Activated T-helper 2 cell treated with anti-CD3 and anti-CD28 coated beads, Interferon-gamma antibody, Interleukin-2, Interleukin-4, amounts not matched to agents 10 μg/mL and 5 μg/mL and 100 μg/mL, durations not matched to agents 14 hours and 24 hours and 36 hours (primary cell): ENCODE measurements at regions of chr7 and their contacts with region 1.

Region 1: GRCh38 chr7:6577365-6578113 is at the start of gene ZDHHC4:
- DNase-seq: peak; percentile 80
- H3K4me3 Mint-ChIP-seq: peak within 1 kb of the TSS; percentile 82
- H3K27ac Mint-ChIP-seq: peak within 1 kb of the TSS; percentile 82
- H3K4me1 Mint-ChIP-seq: peaks cover 23% of the 10 kb centered on the region
- H3K27me3 Mint-ChIP-seq: no peaks in the 10 kb centered on the region
- total RNA-seq, gene ZDHHC4: 23.9 and 29.9 TPM in 2 replicates

Region 2: DNA sequence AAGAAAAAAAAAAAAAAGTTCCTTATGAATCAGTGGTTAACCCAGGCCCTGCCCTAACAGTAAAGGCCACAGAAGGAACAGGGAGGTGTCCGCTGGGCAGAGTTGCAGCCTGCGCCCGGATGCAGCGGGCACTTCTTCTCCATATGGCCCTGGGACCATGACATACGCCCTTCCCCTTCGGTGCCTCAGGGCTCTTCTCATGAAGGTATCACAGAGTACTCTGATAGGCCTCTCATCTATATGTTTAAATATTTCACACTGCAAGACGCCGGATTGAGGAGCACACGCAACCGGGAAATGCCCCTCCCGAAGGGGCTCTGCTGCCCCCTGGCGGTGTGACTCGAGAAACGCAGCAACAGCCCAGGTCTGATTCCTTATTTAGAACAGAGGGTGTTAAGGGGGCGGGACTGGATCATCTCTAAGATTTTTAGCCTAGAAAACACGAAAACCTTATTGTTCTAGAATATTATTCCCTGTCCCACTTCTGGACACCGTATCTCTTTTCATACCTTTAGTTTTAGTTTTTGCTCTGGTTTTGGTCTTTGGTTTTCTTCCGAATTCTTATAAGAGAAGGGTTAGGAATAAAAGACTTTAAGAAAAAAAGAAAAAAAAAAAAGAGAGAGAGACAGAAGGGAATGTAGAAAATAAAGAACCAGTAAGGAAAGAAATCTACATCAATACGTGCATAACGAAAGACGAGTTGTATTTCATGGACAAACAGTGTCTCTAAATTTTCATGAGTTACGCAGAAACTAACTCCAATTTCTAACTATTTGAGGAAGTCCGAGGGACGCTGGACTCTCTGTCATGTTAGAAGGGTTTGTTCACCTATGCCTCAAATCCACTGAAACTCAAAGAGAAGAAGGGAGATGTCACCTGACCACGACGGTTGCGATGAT is 141.8 kb before region 1 on chr7:
- intact Hi-C with region 1: no loop called
- DNase-seq: peak; percentile 81
- H3K4me3 Mint-ChIP-seq: peak overlapping the region; percentile 69
- H3K27ac Mint-ChIP-seq: peak overlapping the region; percentile 79
- H3K4me1 Mint-ChIP-seq: peaks cover 27% of the 10 kb centered on the region
- H3K27me3 Mint-ChIP-seq: no peaks in the 10 kb centered on the region

Region 3: GRCh38 chr7:6533893-6534495 is 43.5 kb before region 1 on chr7:
- intact Hi-C with region 1: loop called (anchors 2 kb)
- DNase-seq: no peak
- H3K4me3 Mint-ChIP-seq: no peak overlapping the region
- H3K27ac Mint-ChIP-seq: no peak overlapping the region
- H3K4me1 Mint-ChIP-seq: peaks cover 13% of the 10 kb centered on the region
- H3K27me3 Mint-ChIP-seq: peaks cover 37% of the 10 kb centered on the region

Region 4: DNA sequence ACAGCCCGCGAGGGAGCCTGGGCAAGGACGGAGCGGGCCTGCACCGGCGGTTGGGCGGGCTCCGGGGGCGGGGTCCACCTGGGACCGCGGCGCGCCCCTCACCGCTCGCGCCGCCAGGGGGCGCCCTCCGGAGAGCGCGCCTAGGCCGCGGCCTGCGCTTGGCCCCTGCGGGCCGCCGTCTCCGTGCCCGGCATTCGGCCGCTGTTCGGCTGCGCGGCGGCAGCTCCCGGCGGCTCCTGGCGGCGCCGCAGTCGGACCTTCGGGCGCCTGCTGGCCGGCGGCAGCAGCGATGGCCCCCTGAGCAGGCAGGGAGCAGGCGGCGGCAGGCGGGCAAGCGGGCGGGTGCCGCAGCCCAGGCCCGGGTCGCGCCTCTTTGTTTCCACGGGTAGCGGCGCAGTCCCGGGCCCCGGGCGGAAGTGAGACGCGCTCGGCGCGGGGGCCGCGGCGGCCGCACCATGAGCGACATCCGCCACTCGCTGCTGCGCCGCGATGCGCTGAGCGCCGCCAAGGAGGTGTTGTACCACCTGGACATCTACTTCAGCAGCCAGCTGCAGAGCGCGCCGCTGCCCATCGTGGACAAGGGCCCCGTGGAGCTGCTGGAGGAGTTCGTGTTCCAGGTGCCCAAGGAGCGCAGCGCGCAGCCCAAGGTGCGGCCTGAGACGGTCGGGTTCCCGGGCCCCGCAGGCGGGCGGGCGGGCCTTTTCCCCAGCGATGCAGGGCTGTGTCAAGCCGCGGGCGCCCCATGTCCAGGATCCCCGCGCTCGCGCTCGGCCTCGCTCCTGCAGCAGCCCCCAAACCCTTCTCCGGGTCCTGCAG is 12.5 kb after region 1 on chr7 and contains the start of gene INTS15:
- intact Hi-C with region 1: loop called (anchors 1 kb)
- DNase-seq: peak; percentile 80
- H3K4me3 Mint-ChIP-seq: peak within 1 kb of the TSS; percentile 96
- H3K27ac Mint-ChIP-seq: peak within 1 kb of the TSS; percentile 90
- H3K4me1 Mint-ChIP-seq: peaks cover 12% of the 10 kb centered on the region
- H3K27me3 Mint-ChIP-seq: no peaks in the 10 kb centered on the region
- total RNA-seq, gene INTS15: 41.1 and 42.1 TPM in 2 replicates